Mammary epithelial cell (primary cell): ENCODE measurements at regions of chr15 and their contacts with region 1.

Region 1: GRCh38 chr15:86624261-86625036 is 544.8 kb downstream of the AGBL1 start:
- DNase-seq: peak; percentile 95
- H3K4me3 ChIP-seq: no peak overlapping the region
- H3K27ac ChIP-seq: no peak overlapping the region
- H3K4me1 ChIP-seq: peaks cover 19% of the 10 kb centered on the region
- H3K27me3 ChIP-seq: no peaks in the 10 kb centered on the region
- CTCF ChIP-seq: peak; percentile 58 to 72

Region 2: DNA sequence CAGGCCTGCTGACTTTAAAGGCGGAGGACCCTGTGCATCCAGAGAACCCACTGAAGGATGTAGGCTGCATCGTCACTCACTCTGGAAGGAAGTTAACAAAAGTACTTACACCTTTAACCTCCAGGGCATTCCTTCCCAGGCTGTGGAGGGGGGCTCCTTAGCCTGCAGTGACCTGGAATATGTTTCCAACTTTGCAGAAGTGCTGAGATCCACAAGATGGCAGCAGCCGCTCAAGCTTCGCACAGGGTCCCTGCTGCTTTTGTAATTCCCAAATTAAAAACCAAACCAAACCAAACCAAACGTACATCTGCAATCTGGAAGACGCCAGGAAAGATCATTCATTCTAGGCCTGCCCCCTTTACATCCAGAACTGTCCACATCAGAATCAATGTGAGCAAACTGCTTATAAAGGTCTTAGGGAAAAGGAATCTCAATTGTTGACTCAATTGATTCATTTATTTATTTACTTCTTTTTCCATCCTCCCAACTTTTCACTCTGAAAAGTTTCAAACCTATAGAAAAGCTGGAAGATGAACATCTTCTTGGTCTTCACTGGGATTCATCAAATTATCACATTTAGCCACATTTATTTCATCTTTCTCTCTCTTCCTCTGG is 759.3 kb before region 1 on chr15:
- CTCF ChIA-PET with region 1: no interaction called
- dilution Hi-C with region 1: no loop called
- in situ Hi-C with region 1: loop called in 1 of 2 experiments (anchors 25 kb)
- intact Hi-C with region 1: loop called (anchors 5 kb)
- DNase-seq: no peak
- H3K4me3 ChIP-seq: no peak overlapping the region
- H3K27ac ChIP-seq: no peak overlapping the region
- H3K4me1 ChIP-seq: no peaks in the 10 kb centered on the region
- H3K27me3 ChIP-seq: no peaks in the 10 kb centered on the region
- CTCF ChIP-seq: peak; percentile 55 to 76

Region 3: GRCh38 chr15:86743283-86743903 is 118.9 kb after region 1 on chr15:
- CTCF ChIA-PET with region 1: no interaction called
- dilution Hi-C with region 1: no loop called
- in situ Hi-C with region 1: loop called in 1 of 2 experiments (anchors 10 kb)
- intact Hi-C with region 1: loop called (anchors 1 kb)
- DNase-seq: peak; percentile 43
- H3K4me3 ChIP-seq: no peak overlapping the region
- H3K27ac ChIP-seq: no peak overlapping the region
- H3K4me1 ChIP-seq: no peaks in the 10 kb centered on the region
- H3K27me3 ChIP-seq: no peaks in the 10 kb centered on the region
- CTCF ChIP-seq: peak; percentile 92 to 98

Region 4: GRCh38 chr15:86863226-86863915 is 238.9 kb after region 1 on chr15:
- CTCF ChIA-PET with region 1: no interaction called
- dilution Hi-C with region 1: no loop called
- in situ Hi-C with region 1: no loop called
- intact Hi-C with region 1: loop called (anchors 1 kb)
- DNase-seq: peak; percentile 98
- H3K4me3 ChIP-seq: no peak overlapping the region
- H3K27ac ChIP-seq: peak overlapping the region; percentile 61
- H3K4me1 ChIP-seq: peaks cover 26% of the 10 kb centered on the region
- H3K27me3 ChIP-seq: no peaks in the 10 kb centered on the region
- CTCF ChIP-seq: no peak

Region 5: DNA sequence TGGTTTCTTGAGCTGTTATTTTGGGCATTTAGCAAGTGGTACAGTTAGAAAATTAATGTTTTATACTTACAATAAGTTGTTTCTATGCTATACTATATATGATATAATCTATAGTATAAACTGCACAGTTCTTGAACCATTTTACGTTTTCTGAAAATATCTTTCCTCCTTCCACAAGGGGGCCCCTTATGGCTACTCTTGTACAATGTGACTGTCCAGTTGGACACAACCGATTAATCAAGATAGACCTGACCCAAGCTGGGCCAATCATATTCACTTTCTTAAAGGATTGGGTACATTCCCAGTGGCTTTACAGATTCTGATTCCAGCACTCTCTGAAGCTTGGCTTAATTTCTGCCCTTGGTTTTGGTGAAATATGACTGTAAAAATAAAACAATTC is 408.6 kb after region 1 on chr15:
- CTCF ChIA-PET with region 1: no interaction called
- dilution Hi-C with region 1: no loop called
- in situ Hi-C with region 1: no loop called
- intact Hi-C with region 1: loop called (anchors 1 kb)
- DNase-seq: no peak
- H3K4me3 ChIP-seq: no peak overlapping the region
- H3K27ac ChIP-seq: no peak overlapping the region
- H3K4me1 ChIP-seq: peaks cover 19% of the 10 kb centered on the region
- H3K27me3 ChIP-seq: no peaks in the 10 kb centered on the region
- CTCF ChIP-seq: peak in 1 of 2 donors; percentile 31

Region 6: DNA sequence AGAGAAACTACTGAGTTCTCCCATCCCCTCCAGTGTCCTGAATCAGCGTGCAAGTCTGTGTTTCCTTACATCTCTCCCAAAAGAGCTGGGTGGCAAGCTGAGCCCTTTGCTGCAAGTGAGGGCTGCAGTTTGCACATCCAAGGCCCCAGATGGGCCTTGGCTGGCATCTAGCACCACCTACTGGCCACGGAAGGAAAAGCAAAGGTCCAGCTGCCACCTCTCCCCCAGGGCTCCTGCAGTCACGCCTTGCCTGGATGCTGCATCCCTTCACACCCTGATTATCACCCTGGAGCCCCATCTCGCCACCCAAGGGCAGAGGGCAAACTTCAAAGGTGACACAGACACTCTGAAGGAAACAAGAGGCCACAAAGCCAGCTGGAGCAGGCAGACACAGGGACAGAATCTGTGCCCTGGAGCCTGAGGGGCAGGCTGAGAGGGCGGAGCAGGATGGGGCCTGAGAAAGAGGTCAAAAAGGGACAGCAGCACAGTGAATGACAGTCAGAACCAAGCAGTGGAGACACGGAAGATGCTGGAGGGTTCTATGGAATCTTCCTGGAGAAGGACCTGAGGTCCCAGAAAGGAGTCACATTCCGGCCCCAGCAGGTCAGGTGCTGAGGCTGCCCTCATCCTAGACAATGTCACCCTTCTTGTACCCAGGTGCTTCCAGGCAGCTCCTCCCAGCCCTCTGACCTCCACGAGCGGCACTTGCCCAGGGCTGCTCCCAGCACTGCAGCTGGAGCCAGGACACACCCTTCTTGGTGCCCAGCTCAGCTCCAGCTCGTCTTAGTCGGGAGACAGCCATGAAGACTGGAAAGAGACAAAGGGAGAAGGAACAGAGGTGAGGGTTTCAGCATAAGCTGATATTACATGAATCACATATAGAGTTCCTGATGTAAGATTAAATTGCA is 1650.4 kb after region 1 on chr15:
- CTCF ChIA-PET with region 1: no interaction called
- dilution Hi-C with region 1: no loop called
- in situ Hi-C with region 1: no loop called
- intact Hi-C with region 1: loop called (anchors 1 kb)
- DNase-seq: peak; percentile 44
- H3K4me3 ChIP-seq: no peak overlapping the region
- H3K27ac ChIP-seq: no peak overlapping the region
- H3K4me1 ChIP-seq: no peaks in the 10 kb centered on the region
- H3K27me3 ChIP-seq: peaks cover 2% of the 10 kb centered on the region
- CTCF ChIP-seq: peak; percentile 83 to 96